ENCODE measurements at regions of chr17 and their contacts with region 1.

Region 1: GRCh38 chr17:79810130-79811010 is 13.5 kb upstream of the CBX8 start:
- DNase-seq: peak; percentile 87
- H3K4me3 Mint-ChIP-seq: no peak overlapping the region
- H3K27ac Mint-ChIP-seq: peak overlapping the region; percentile 28
- H3K4me1 Mint-ChIP-seq: peaks cover 39% of the 10 kb centered on the region
- H3K27me3 Mint-ChIP-seq: peaks cover 95% of the 10 kb centered on the region

Region 2: GRCh38 chr17:79728226-79728907 is 82.0 kb before region 1 on chr17:
- CTCF ChIA-PET with region 1: no interaction called
- DNase-seq: peak; percentile 91
- H3K4me3 Mint-ChIP-seq: peak overlapping the region; percentile 62
- H3K27ac Mint-ChIP-seq: peak overlapping the region; percentile 82
- H3K4me1 Mint-ChIP-seq: peaks cover 22% of the 10 kb centered on the region
- H3K27me3 Mint-ChIP-seq: no peaks in the 10 kb centered on the region

Region 3: GRCh38 chr17:79747508-79748295 is 62.7 kb before region 1 on chr17:
- CTCF ChIA-PET with region 1: interaction called, 11 read pairs
- DNase-seq: peak; percentile 38
- H3K4me3 Mint-ChIP-seq: no peak overlapping the region
- H3K27ac Mint-ChIP-seq: no peak overlapping the region
- H3K4me1 Mint-ChIP-seq: peaks cover 23% of the 10 kb centered on the region
- H3K27me3 Mint-ChIP-seq: peaks cover 91% of the 10 kb centered on the region

Region 4: GRCh38 chr17:79760197-79760906 is 50.0 kb before region 1 on chr17:
- CTCF ChIA-PET with region 1: no interaction called
- DNase-seq: no peak
- H3K4me3 Mint-ChIP-seq: no peak overlapping the region
- H3K27ac Mint-ChIP-seq: no peak overlapping the region
- H3K4me1 Mint-ChIP-seq: no peaks in the 10 kb centered on the region
- H3K27me3 Mint-ChIP-seq: peaks cover 36% of the 10 kb centered on the region

Region 5: DNA sequence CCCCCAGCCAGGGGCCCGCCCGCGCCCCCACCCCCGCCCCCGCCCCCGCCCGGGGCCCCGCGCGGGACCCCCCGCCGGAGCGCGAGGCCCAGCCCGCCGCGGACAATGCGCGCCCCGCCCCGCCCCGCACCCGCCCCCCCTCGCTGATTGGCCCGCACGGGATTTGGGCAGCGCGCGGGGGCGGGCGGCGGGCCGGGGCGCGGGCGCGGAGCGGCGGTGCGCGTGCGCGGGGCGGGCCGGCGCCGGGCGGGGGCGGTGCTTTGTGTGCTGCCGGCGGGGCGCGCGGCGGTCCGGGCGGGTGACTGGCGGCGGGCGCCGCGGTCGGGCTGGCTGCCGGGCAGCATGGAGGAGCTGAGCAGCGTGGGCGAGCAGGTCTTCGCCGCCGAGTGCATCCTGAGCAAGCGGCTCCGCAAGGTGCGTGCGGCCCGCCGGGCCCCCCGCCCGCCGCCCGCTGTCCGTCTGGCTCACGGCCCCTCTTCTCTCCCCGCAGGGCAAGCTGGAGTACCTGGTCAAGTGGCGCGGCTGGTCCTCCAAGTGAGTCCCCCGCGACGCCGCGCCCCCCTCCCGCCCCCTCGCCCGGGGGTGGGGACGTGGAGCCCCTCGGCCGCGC is 32.4 kb before region 1 on chr17 and contains the start of gene CBX2:
- CTCF ChIA-PET with region 1: no interaction called
- DNase-seq: peak; percentile 85
- H3K4me3 Mint-ChIP-seq: peak within 1 kb of the TSS; percentile 85
- H3K27ac Mint-ChIP-seq: peak within 1 kb of the TSS; percentile 60
- H3K4me1 Mint-ChIP-seq: peaks cover 47% of the 10 kb centered on the region
- H3K27me3 Mint-ChIP-seq: peaks cover 83% of the 10 kb centered on the region

Region 6: GRCh38 chr17:79839363-79840268 is 29.2 kb after region 1 on chr17 and contains the start of gene CBX4:
- CTCF ChIA-PET with region 1: interaction called, 39 read pairs
- DNase-seq: peak; percentile 95
- H3K4me3 Mint-ChIP-seq: peak within 1 kb of the TSS; percentile 99
- H3K27ac Mint-ChIP-seq: peak within 1 kb of the TSS; percentile 98
- H3K4me1 Mint-ChIP-seq: peaks cover 60% of the 10 kb centered on the region
- H3K27me3 Mint-ChIP-seq: peaks cover 56% of the 10 kb centered on the region

Region 7: GRCh38 chr17:79844869-79845600 is 34.7 kb after region 1 on chr17:
- CTCF ChIA-PET with region 1: interaction called, 27 read pairs
- DNase-seq: peak; percentile 64
- H3K4me3 Mint-ChIP-seq: no peak overlapping the region
- H3K27ac Mint-ChIP-seq: no peak overlapping the region
- H3K4me1 Mint-ChIP-seq: peaks cover 31% of the 10 kb centered on the region
- H3K27me3 Mint-ChIP-seq: peaks cover 99% of the 10 kb centered on the region

Region 8: DNA sequence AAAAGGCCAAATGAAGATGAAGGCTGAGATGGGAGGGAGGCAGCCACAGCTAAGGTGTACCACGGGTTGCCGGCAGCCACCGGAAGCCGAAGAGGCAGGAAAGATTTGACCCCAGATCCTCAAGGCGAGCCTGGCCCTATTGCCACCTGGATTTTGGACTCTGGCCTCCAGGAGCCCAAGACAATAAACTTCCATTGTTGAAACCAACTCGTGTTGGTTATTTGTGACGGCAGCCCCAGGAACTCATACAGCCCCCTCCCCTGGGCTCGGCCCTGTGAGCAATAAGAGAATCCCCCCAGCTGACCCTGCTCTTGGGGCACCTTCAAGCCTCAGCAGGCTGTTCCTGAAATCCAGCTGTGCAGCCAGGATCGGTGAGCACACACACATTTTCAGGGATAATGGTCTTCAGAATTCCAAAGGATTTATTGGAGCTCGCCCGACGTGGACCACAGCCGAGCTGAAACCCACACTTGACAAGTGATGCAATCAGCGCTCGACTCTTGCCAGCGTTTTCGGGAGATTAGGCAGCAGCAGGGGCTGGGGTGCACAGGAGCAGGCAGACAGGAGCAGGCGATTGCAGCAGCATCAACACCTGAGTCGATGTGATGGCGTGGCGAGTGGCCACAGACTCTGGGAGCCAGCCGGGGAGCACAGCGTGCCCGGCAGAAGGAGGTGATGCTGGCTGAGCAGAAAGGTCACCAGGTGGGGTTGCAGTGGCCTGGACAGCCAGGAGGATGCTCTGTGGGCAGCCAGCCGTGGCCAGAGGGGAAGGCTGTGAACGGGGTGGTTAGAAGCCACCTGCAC is 51.2 kb after region 1 on chr17:
- CTCF ChIA-PET with region 1: no interaction called
- DNase-seq: no peak
- H3K4me3 Mint-ChIP-seq: no peak overlapping the region
- H3K27ac Mint-ChIP-seq: peak overlapping the region; percentile 42
- H3K4me1 Mint-ChIP-seq: peaks cover 5% of the 10 kb centered on the region
- H3K27me3 Mint-ChIP-seq: peaks cover 74% of the 10 kb centered on the region

Region 9: GRCh38 chr17:79915850-79916430 is 105.6 kb after region 1 on chr17:
- CTCF ChIA-PET with region 1: interaction called, 11 read pairs
- DNase-seq: peak; percentile 56
- H3K4me3 Mint-ChIP-seq: no peak overlapping the region
- H3K27ac Mint-ChIP-seq: no peak overlapping the region
- H3K4me1 Mint-ChIP-seq: no peaks in the 10 kb centered on the region
- H3K27me3 Mint-ChIP-seq: peaks cover 76% of the 10 kb centered on the region

Region 10: GRCh38 chr17:79970576-79971068 is 160.3 kb after region 1 on chr17:
- CTCF ChIA-PET with region 1: interaction called, 13 read pairs
- DNase-seq: peak; percentile 74
- H3K4me3 Mint-ChIP-seq: no peak overlapping the region
- H3K27ac Mint-ChIP-seq: no peak overlapping the region
- H3K4me1 Mint-ChIP-seq: peaks cover 4% of the 10 kb centered on the region
- H3K27me3 Mint-ChIP-seq: peaks cover 31% of the 10 kb centered on the region

Region 11: GRCh38 chr17:79993198-79994032 is 183.0 kb after region 1 on chr17:
- CTCF ChIA-PET with region 1: interaction called, 10 read pairs
- DNase-seq: peak; percentile 70
- H3K4me3 Mint-ChIP-seq: no peak overlapping the region
- H3K27ac Mint-ChIP-seq: peak overlapping the region; percentile 69
- H3K4me1 Mint-ChIP-seq: peaks cover 62% of the 10 kb centered on the region
- H3K27me3 Mint-ChIP-seq: peaks cover 31% of the 10 kb centered on the region

Measured in activated naive CD4-positive, alpha-beta T cell treated with anti-CD3 and anti-CD28 coated beads, Interleukin-2, amount 10 ng/mL, durations not matched to agents 7 days and 5 days (primary cell).